ENCODE measurements at regions of chr3 and their contacts with region 1.

Region 1: DNA sequence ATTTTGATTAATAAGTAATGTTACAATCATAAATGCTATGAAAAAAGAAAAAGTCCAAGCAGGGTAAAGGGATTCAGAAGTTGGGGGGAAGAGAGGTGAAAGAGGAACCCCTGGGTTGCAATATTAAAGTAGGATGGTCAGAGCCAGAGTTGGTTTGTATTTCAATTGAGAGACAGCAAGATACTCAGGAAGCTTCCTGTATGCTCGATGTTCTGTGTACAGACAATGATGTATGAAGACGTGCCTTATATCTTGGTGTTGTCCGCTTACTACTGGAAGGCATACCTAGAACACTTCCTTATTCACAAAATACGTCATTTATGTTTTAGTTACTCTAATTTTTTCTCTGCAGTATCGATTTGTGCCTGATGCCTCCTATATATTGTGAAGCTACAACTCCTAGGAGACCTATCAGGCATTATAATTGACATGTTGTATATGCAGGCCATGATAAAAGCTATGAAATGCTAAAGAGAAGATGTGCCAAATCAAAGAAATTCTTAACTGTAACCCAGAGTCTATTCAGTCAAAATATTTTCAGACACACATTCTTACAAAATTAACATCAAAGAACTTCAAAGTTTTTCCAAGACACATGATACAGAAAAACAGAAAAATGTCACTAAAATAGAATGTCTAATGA is 87.5 kb downstream of the TBL1XR1 start:
- DNase-seq: peak in 7 of 9 donors; percentile 17 to 70 (median 60)
- ATAC-seq: peak; percentile 92
- H3K4me3 ChIP-seq: no peak overlapping the region
- H3K4me3 Mint-ChIP-seq: peak overlapping the region; percentile 7 to 79 (median 60)
- H3K27ac ChIP-seq: peak overlapping the region; percentile 60
- H3K27ac Mint-ChIP-seq: peak overlapping the region in 8 of 9 donors; percentile 84 to 95 (median 89)
- H3K4me1 ChIP-seq: peaks cover 16 to 36% of the 10 kb centered on the region in 2 donors
- H3K4me1 Mint-ChIP-seq: peaks cover 47 to 89% (median 77%) of the 10 kb centered on the region in 7 donors
- H3K27me3 ChIP-seq: no peaks in the 10 kb centered on the region
- H3K27me3 Mint-ChIP-seq: no peaks in the 10 kb centered on the region

Region 2: GRCh38 chr3:177119829-177120228 is 10.0 kb after region 1 on chr3:
- CTCF ChIA-PET with region 1: no interaction called
- POLR2A ChIA-PET with region 1: interaction called, 7 read pairs
- intact Hi-C with region 1: loop called in 1 of 2 experiments (anchors 1 kb)
- DNase-seq: peak in 1 of 9 donors; percentile 31
- ATAC-seq: no peak
- H3K4me3 ChIP-seq: no peak overlapping the region
- H3K4me3 Mint-ChIP-seq: peak overlapping the region in 1 of 10 donors; percentile 28
- H3K27ac ChIP-seq: no peak overlapping the region
- H3K27ac Mint-ChIP-seq: peak overlapping the region in 6 of 9 donors; percentile 10 to 52 (median 26)
- H3K4me1 ChIP-seq: peaks cover 5 to 33% of the 10 kb centered on the region in 2 donors
- H3K4me1 Mint-ChIP-seq: peaks cover 46 to 97% (median 91%) of the 10 kb centered on the region in 7 donors
- H3K27me3 ChIP-seq: no peaks in the 10 kb centered on the region
- H3K27me3 Mint-ChIP-seq: no peaks in the 10 kb centered on the region

Region 3: DNA sequence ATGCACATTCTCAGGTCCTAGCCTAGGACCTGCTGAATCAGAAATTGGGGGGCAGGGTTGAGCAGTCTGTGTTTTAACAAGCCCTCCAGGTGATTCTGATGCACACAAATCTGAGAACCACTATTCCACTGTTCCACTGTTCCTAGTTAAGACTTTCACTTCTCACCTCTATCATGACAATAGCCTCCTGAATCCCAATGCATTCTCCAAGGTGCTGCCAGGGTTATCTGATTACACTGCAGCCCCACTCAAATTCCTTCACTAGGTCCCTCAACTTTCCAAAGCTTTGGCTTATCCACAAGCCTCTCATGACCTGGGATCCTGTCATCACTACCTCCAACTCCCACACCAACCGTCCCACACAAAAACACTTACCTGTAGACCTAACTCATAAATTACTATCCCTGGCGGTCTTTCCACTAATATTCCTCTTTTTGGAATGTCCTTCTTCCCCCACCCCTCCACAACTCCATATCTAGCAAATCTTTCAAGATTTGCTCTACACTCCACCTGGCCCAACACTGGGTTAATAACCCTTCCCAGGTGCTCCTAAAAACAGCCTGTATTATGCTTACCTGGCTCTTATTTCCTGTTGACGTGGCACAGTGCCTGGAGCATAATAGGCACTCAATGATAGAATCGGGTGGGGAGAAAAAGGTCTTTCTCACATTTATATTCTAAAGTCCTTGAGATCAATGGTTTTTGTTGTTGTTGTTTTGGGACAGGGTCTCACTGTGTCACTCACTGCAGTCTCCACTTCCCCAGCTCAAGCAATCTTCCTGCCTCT is 60.3 kb after region 1 on chr3:
- CTCF ChIA-PET with region 1: no interaction called
- POLR2A ChIA-PET with region 1: no interaction called
- intact Hi-C with region 1: no loop called
- DNase-seq: no peak
- ATAC-seq: no peak
- H3K4me3 ChIP-seq: no peak overlapping the region
- H3K4me3 Mint-ChIP-seq: peak overlapping the region in 9 of 10 donors; percentile 21 to 73 (median 61)
- H3K27ac ChIP-seq: no peak overlapping the region
- H3K27ac Mint-ChIP-seq: peak overlapping the region; percentile 2 to 82 (median 44)
- H3K4me1 ChIP-seq: peaks cover 22 to 28% of the 10 kb centered on the region in 2 donors
- H3K4me1 Mint-ChIP-seq: peaks cover 48 to 88% (median 71%) of the 10 kb centered on the region in 7 donors
- H3K27me3 ChIP-seq: no peaks in the 10 kb centered on the region
- H3K27me3 Mint-ChIP-seq: no peaks in the 10 kb centered on the region

Region 4: GRCh38 chr3:178325330-178325729 is 1215.5 kb after region 1 on chr3:
- CTCF ChIA-PET with region 1: no interaction called
- POLR2A ChIA-PET with region 1: no interaction called
- intact Hi-C with region 1: loop called in 1 of 2 experiments (anchors 10 kb)
- DNase-seq: peak in 4 of 9 donors; percentile 5 to 33 (median 22)
- ATAC-seq: no peak
- H3K4me3 ChIP-seq: no peak overlapping the region
- H3K4me3 Mint-ChIP-seq: no peak overlapping the region
- H3K27ac ChIP-seq: no peak overlapping the region
- H3K27ac Mint-ChIP-seq: no peak overlapping the region
- H3K4me1 ChIP-seq: no peaks in the 10 kb centered on the region
- H3K4me1 Mint-ChIP-seq: no peaks in the 10 kb centered on the region
- H3K27me3 ChIP-seq: no peaks in the 10 kb centered on the region
- H3K27me3 Mint-ChIP-seq: no peaks in the 10 kb centered on the region